ENCODE measurements at regions of chr2 and their contacts with region 1.

Region 1: GRCh38 chr2:126571403-126571802 is 84.6 kb upstream of the GYPC start:
- DNase-seq: no peak
- H3K4me3 ChIP-seq: no peak overlapping the region
- H3K27ac ChIP-seq: no peak overlapping the region
- H3K4me1 ChIP-seq: no peaks in the 10 kb centered on the region
- H3K27me3 ChIP-seq: no peaks in the 10 kb centered on the region
- CTCF ChIP-seq: no peak

Region 2: DNA sequence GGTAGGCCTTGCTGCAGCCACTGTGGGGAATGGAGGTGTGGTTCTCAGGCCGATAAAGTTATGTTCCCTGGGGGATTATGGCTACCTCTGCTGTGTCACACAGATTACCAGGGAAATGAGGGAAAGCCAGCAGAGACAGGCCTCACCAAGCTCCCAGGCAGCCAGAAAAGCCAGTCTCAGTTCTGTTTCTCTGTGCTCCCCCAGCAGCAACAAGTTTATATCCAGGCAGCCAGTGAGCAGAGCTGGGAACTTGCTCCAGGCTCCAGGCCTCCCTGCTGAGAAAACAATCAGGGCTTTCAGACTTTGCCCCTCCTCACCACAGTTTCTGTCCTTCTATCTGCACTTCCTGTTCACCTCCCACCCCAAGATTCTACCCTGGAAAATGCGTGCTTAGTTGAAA is 512.0 kb before region 1 on chr2:
- intact Hi-C with region 1: loop called (anchors 5 kb)
- DNase-seq: no peak
- H3K4me3 ChIP-seq: no peak overlapping the region
- H3K27ac ChIP-seq: no peak overlapping the region
- H3K4me1 ChIP-seq: no peaks in the 10 kb centered on the region
- H3K27me3 ChIP-seq: no peaks in the 10 kb centered on the region
- CTCF ChIP-seq: no peak

Region 3: DNA sequence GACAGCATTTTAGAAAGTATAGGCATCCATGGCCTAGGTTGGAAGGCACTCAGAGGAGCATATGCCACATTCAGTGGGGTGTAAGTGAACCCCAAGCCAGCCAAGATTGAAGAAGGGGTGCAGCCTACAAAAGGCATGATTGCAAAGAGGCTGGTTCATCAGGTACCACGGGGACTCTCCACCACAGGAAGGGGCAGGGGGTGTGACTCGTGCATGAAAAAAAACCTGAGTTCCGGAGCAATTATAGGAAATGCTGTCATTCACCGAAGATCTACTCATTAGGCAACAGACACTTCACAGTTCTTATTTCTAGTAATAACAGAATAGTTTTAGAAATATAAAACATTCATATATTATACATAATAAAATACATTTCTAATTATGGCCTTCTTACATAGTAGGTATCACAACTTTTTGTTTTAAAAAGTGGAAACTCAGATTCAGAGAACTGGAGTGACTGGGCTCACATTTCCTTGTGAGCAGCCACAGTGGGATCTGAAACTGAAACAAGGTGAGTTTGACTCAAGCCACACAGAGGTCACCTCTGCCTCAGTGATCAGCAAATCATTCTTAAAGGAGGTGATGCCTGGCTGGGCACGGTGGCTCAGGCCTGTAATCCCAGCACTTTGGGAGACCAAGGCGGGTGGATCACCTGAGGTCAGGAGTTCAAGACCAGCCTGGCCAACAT is 103.9 kb before region 1 on chr2:
- intact Hi-C with region 1: no loop called
- DNase-seq: no peak
- H3K4me3 ChIP-seq: no peak overlapping the region
- H3K27ac ChIP-seq: no peak overlapping the region
- H3K4me1 ChIP-seq: no peaks in the 10 kb centered on the region
- H3K27me3 ChIP-seq: peaks cover 0 to 5% of the 10 kb centered on the region in 2 donors
- CTCF ChIP-seq: no peak